Activated T-helper 1 cell treated with anti-CD3 and anti-CD28 coated beads, Interleukin-12 subunit alpha, Interleukin-12 subunit beta, Interleukin-2, Interleukin-4 antibody, amounts not matched to agents 30 ng/mL and 10 ng/mL and 1 ng/mL, durations not matched to agents 14 hours and 24 hours and 36 hours (primary cell): ENCODE measurements at regions of chr10 and their contacts with region 1.

Region 1: DNA sequence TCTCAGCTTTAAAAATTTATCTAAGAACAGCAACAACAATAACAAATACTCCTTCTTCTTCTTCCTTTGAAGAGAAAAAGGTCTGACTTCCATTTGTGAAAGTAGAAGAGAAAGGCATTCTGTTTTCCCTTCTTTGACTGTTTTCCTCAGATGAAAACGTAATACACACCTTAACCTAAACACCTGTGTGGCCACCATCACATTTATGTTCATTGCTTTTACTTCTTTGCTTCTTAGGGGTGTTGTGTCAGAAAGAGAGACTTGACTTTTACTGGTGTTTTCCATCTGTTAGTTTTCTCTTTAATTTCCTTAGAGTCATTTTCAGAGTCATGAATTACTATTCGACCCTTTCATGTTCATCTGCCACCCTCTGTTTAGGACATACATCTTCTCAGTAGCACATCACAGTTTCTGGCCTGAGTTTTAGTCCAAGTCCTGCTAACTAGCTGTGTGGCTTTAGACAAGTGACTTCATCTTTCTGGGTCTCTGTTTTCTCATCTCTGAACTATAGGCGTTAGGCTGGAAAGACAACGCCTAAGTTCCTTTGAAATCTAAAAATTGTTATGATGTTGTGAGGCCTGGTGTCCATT is 283.8 kb downstream of the GATA3 start:
- DNase-seq: no peak
- H3K4me3 Mint-ChIP-seq: no peak overlapping the region
- H3K27ac Mint-ChIP-seq: peak overlapping the region; percentile 90
- H3K4me1 Mint-ChIP-seq: peaks cover 25% of the 10 kb centered on the region
- H3K27me3 Mint-ChIP-seq: peaks cover 19% of the 10 kb centered on the region

Region 2: GRCh38 chr10:8065651-8066050 is 272.6 kb before region 1 on chr10:
- intact Hi-C with region 1: loop called (anchors 1 kb)
- DNase-seq: no peak
- H3K4me3 Mint-ChIP-seq: peak overlapping the region; percentile 77
- H3K27ac Mint-ChIP-seq: peak overlapping the region; percentile 88
- H3K4me1 Mint-ChIP-seq: peaks cover 92% of the 10 kb centered on the region
- H3K27me3 Mint-ChIP-seq: peaks cover 2% of the 10 kb centered on the region

Region 3: GRCh38 chr10:8254350-8254749 is 83.9 kb before region 1 on chr10:
- intact Hi-C with region 1: loop called (anchors 1 kb)
- DNase-seq: no peak
- H3K4me3 Mint-ChIP-seq: peak overlapping the region; percentile 38
- H3K27ac Mint-ChIP-seq: peak overlapping the region; percentile 77
- H3K4me1 Mint-ChIP-seq: peaks cover 48% of the 10 kb centered on the region
- H3K27me3 Mint-ChIP-seq: no peaks in the 10 kb centered on the region

Region 4: GRCh38 chr10:8312781-8313180 is 25.5 kb before region 1 on chr10:
- intact Hi-C with region 1: loop called (anchors 1 kb)
- DNase-seq: no peak
- H3K4me3 Mint-ChIP-seq: no peak overlapping the region
- H3K27ac Mint-ChIP-seq: peak overlapping the region; percentile 67
- H3K4me1 Mint-ChIP-seq: peaks cover 53% of the 10 kb centered on the region
- H3K27me3 Mint-ChIP-seq: no peaks in the 10 kb centered on the region

Region 5: GRCh38 chr10:8416192-8416701 is 78.0 kb after region 1 on chr10:
- intact Hi-C with region 1: loop called (anchors 1 kb)
- DNase-seq: peak; percentile 16
- H3K4me3 Mint-ChIP-seq: peak overlapping the region; percentile 9
- H3K27ac Mint-ChIP-seq: peak overlapping the region; percentile 85
- H3K4me1 Mint-ChIP-seq: peaks cover 36% of the 10 kb centered on the region
- H3K27me3 Mint-ChIP-seq: peaks cover 9% of the 10 kb centered on the region

Region 6: DNA sequence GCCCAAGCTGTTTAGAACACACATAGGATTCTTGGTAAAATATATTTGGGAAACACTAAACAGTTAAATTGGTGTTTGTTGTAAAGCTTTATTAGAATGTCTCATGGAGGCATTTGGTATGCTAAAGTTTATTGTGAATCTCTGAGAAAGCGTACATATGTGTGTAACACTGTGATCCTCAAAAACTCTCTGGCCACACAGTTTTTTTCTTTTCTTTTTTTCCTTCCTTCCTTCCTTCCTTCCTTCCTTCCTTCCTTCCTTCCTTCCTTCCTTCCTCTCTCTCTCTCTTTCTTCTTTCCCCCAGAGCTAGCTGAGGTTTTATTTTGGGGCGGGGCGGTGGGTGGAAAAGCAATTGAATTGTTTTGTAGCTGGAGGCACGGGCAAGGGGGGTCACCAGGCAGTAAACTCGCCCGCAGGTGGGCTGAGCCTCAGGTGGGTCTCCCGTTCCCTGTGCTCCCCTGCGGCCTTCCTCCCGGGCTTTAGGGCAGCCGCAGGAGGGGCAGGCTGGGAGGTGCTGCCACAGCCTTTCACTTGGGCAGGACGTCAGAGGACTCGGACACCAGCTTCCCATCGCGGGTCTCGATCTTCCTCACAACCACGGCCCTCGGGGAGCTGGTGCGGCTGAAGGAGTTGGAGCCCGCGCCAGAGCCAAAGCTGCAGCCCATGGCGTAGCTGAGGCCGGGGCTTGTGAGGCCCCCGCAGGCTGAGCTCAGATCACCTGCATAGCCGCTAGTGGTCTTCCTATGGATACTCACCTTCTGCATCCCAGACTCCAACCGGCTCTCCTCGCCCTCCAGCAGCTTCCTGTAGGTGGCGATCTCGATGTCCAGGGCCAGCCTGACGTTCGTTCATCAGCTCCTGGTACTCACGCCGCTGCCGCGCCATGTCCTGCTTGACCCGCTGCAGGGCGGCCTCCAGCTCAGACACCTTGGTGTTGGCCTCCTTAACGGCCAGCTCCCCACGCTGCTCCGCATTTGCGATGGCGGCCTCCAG is 175.2 kb after region 1 on chr10:
- intact Hi-C with region 1: no loop called
- DNase-seq: no peak
- H3K4me3 Mint-ChIP-seq: no peak overlapping the region
- H3K27ac Mint-ChIP-seq: no peak overlapping the region
- H3K4me1 Mint-ChIP-seq: no peaks in the 10 kb centered on the region
- H3K27me3 Mint-ChIP-seq: peaks cover 7% of the 10 kb centered on the region

Region 7: DNA sequence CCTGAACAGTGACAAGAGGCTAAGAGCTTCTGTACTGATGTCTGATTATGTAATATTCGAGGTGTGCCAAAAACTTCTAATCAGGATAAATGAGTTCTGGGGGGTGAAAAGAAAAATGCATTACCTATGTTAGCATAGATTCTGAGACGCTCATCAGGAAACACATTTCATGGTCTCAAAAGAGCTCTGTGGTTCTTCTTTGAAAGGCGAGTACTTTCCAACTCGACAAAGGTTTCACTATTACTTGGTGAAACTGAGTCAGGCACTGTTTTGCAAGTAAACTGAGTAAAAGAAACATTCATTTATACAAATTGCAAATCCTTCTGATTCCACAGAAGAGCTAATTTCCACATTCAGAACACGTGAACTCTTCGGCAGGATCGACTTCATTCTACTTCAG is 239.4 kb after region 1 on chr10:
- intact Hi-C with region 1: loop called (anchors 2 kb)
- DNase-seq: no peak
- H3K4me3 Mint-ChIP-seq: peak overlapping the region; percentile 27
- H3K27ac Mint-ChIP-seq: peak overlapping the region; percentile 64
- H3K4me1 Mint-ChIP-seq: peaks cover 40% of the 10 kb centered on the region
- H3K27me3 Mint-ChIP-seq: peaks cover 3% of the 10 kb centered on the region